Activated CD4-positive, alpha-beta memory T cell treated with anti-CD3 and anti-CD28 coated beads, Interleukin-2, amount 10 ng/mL, durations not matched to agents 7 days and 5 days (primary cell): ENCODE measurements at regions of chr16 and their contacts with region 1.

Region 1: DNA sequence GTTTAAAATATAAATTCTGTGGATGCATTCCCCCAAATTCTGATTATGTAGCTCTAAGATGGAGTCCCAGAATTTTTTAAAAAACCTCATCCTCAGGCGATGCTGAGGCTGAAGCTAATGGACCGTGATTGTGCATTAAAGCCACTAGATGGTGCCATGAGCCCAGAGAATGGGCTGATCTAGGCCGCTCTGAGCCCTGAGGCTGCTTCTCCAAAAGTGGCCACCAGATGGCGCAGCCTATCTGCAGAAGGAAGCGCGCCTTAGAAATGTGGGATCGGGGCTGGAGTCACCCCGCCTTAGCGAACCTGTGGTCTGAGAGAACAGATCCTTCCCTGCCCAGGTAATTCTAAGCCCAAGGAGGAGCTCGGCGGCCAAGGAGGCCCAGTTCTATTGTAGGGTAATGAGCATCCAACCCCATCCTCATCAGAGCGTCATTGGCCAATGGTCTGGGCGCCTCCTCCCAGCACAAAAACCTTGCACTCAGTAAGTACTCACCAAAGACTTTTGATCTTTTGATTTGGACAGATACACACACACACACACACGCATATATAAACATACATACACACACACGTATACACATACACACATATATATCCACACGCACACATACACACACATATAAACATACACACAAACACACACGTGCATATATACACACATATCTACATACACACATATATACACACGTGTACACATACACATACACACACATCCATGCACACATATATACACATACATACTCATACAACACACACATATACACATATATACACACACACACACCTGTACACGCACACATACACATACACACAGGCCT is 13.7 kb upstream of the MMP2 start:
- DNase-seq: peak; percentile 86
- H3K4me3 Mint-ChIP-seq: no peak overlapping the region
- H3K27ac Mint-ChIP-seq: no peak overlapping the region
- H3K4me1 Mint-ChIP-seq: no peaks in the 10 kb centered on the region
- H3K27me3 Mint-ChIP-seq: no peaks in the 10 kb centered on the region

Region 2: GRCh38 chr16:55333684-55334083 is 131.6 kb before region 1 on chr16:
- CTCF ChIA-PET with region 1: no interaction called
- POLR2A ChIA-PET with region 1: no interaction called
- DNase-seq: no peak
- H3K4me3 Mint-ChIP-seq: no peak overlapping the region
- H3K27ac Mint-ChIP-seq: no peak overlapping the region
- H3K4me1 Mint-ChIP-seq: no peaks in the 10 kb centered on the region
- H3K27me3 Mint-ChIP-seq: peaks cover 39% of the 10 kb centered on the region

Region 3: GRCh38 chr16:55475919-55476318 is 10.6 kb after region 1 on chr16:
- CTCF ChIA-PET with region 1: interaction called, 11 read pairs
- POLR2A ChIA-PET with region 1: no interaction called
- DNase-seq: no peak
- H3K4me3 Mint-ChIP-seq: no peak overlapping the region
- H3K27ac Mint-ChIP-seq: no peak overlapping the region
- H3K4me1 Mint-ChIP-seq: peaks cover 25% of the 10 kb centered on the region
- H3K27me3 Mint-ChIP-seq: peaks cover 29% of the 10 kb centered on the region

Region 4: GRCh38 chr16:55543472-55543871 is 78.2 kb after region 1 on chr16:
- CTCF ChIA-PET with region 1: interaction called, 22 read pairs
- POLR2A ChIA-PET with region 1: no interaction called
- DNase-seq: no peak
- H3K4me3 Mint-ChIP-seq: no peak overlapping the region
- H3K27ac Mint-ChIP-seq: no peak overlapping the region
- H3K4me1 Mint-ChIP-seq: no peaks in the 10 kb centered on the region
- H3K27me3 Mint-ChIP-seq: no peaks in the 10 kb centered on the region

Region 5: DNA sequence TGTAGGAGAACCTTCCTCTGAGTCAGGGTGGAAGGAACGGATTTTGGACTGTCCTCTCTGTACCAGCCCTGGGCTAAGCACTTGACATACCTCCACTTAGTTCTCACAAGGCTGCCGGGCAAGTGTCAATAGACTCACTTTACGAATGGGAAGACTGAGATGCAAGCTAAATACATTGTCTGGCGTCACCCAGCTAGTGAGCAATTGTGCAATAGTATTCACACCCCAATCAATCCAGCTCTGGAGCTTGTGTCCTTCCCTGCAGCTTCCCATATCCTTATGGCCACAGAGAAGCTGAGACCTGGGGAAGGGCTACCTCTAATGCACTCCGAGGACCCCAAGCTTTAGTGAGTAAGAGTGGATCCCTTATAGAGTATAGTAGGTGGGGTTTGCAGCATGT is 230.3 kb after region 1 on chr16:
- CTCF ChIA-PET with region 1: interaction called, 113 read pairs
- POLR2A ChIA-PET with region 1: no interaction called
- DNase-seq: no peak
- H3K4me3 Mint-ChIP-seq: no peak overlapping the region
- H3K27ac Mint-ChIP-seq: no peak overlapping the region
- H3K4me1 Mint-ChIP-seq: no peaks in the 10 kb centered on the region
- H3K27me3 Mint-ChIP-seq: no peaks in the 10 kb centered on the region

Region 6: DNA sequence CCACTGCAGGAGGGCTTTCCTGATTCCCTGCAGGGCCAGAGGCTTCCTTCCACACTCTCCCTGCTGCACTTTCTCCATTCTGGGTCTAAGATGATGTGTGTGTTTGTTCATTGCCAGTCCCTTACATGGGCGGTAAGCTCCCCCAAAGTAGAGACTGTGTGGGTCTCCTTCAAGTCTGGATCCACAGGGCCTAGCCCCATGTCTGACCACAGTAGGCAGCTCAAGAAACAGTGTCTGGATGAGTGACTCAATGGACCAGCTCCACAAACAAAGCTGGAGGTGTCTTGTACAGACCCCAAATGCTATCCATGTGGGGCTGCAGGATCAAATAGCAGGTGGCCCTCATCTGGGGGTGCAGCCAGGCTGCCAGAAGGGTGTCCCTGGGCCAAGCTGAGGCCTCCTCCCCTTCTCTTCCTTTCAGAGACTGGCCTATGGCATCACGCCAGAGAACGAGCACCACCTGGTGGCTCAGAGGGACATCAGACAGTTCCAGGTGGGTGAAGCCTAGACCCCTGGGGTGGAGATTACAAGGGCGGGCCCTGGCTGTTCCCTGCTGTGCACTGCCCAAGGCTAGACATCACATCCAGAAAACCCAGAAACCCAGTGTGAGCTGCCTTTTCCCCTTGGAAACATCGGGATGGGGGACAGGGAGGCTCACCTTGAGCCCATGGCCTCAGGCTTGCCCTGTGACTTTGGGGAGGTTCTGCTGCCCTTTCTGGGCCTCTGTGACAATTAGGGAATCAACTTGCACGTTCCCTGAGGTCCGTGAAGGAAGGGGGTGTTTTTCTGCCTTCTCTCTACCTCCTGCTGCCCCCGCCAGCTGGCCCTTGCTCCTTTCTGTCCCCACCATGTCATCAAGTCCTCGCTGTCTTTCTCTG is 236.4 kb after region 1 on chr16:
- CTCF ChIA-PET with region 1: interaction called, 113 read pairs
- POLR2A ChIA-PET with region 1: no interaction called
- DNase-seq: peak; percentile 46
- H3K4me3 Mint-ChIP-seq: no peak overlapping the region
- H3K27ac Mint-ChIP-seq: no peak overlapping the region
- H3K4me1 Mint-ChIP-seq: peaks cover 7% of the 10 kb centered on the region
- H3K27me3 Mint-ChIP-seq: peaks cover 8% of the 10 kb centered on the region